ENCODE measurements at regions of chr2 and their contacts with region 1.

Region 1: DNA sequence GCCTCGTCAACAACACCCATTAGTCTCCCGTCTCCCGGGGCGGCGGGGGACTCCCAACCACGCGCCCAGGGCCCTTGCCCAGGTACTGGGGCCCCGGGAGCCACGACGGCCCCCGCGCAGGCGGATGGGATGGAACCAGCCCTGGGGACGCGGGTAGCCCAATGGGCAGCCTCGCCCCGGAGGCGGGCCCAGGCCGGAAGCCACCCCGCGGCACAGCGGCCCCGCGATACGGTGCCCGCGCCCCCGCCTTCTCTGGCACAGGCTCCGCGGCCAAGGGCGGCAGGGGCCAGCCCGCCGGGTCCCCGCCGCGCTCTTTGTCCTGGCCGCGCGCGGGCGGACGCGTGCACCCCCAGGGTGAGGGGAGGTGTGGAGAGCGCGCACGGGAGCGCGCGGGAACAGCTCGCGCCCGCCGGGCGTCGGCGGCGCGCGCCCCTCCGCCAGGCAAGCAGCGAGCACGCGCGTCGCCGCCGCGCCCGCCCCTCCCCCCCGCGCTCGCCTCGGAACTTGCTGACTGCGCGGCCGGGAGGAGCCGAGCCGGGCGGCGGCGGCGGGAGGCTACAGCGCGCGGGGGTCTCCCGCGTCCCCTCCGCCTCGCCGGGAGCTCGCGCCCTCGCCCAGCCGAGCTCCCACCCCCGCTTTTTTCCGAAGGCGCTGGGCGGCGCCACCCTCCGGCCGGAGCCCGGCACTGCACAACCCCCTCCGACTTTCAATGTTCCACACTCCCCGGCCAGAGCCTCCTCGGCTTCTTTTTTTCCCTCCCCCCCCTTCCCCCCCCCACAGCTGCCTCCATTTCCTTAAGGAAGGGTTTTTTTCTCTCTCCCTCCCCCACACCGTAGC is at the start of gene UBE2E3:
- DNase-seq: peak; percentile 74 to 85 (median 79)
- ATAC-seq: peak; percentile 87
- H3K4me3 ChIP-seq: peak within 1 kb of the TSS; percentile 67
- H3K4me3 Mint-ChIP-seq: peak within 1 kb of the TSS; percentile 91 to 99 (median 96)
- H3K27ac ChIP-seq: peak within 1 kb of the TSS; percentile 62
- H3K27ac Mint-ChIP-seq: peak within 1 kb of the TSS; percentile 94 to 98 (median 98)
- H3K4me1 ChIP-seq: peaks cover 20 to 26% of the 10 kb centered on the region in 2 donors
- H3K4me1 Mint-ChIP-seq: peaks cover 25 to 51% (median 44%) of the 10 kb centered on the region in 7 donors
- H3K27me3 ChIP-seq: no peaks in the 10 kb centered on the region
- H3K27me3 Mint-ChIP-seq: peaks cover 0 to 46% (median 0%) of the 10 kb centered on the region in 5 donors
- total RNA-seq, gene UBE2E3: 21.7 to 33.4 (median 24.3) TPM

Region 2: DNA sequence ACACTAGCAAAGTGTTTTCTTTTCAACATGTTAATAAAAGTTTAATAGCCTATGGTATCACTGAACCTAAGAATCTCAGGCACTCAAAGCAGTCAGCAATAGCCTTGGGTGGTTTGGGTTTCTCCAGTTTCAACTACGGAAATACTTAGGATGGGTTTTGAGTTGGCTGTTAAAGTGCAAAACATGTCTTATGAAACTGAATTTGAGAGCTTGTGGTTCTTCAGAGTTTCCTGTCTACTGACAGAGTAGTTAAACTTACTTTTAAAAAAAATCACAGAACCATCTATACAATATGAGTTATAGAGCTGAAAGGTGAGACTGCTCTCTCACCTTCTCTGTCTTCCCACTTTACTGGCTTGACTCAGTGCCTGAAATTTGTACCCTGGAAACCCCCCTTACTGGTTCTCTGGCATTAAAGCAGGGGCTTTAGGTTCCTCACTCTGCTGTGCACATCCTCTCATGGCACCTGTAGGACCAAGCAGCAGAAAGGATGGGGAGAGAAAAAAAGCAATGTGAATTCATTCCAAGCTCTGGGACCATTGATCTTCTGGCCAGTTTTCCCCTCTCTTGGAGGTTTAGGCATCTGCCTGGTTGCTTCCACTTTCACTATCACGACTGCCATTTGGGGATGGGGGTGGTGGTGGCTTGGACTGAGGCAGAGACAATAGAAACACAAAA is 1948.5 kb before region 1 on chr2:
- CTCF ChIA-PET with region 1: no interaction called
- POLR2A ChIA-PET with region 1: no interaction called
- intact Hi-C with region 1: loop called in 1 of 2 experiments (anchors 10 kb)
- DNase-seq: peak in 8 of 9 donors; percentile 29 to 77 (median 67)
- ATAC-seq: peak; percentile 92
- H3K4me3 ChIP-seq: peak overlapping the region; percentile 40
- H3K4me3 Mint-ChIP-seq: peak overlapping the region; percentile 71 to 87 (median 84)
- H3K27ac ChIP-seq: peak overlapping the region; percentile 80
- H3K27ac Mint-ChIP-seq: peak overlapping the region; percentile 93 to 99 (median 98)
- H3K4me1 ChIP-seq: peaks cover 0 to 15% of the 10 kb centered on the region in 2 donors
- H3K4me1 Mint-ChIP-seq: peaks cover 13 to 76% (median 46%) of the 10 kb centered on the region in 7 donors
- H3K27me3 ChIP-seq: no peaks in the 10 kb centered on the region
- H3K27me3 Mint-ChIP-seq: no peaks in the 10 kb centered on the region

Region 3: GRCh38 chr2:180970016-180970415 is 10.3 kb before region 1 on chr2:
- CTCF ChIA-PET with region 1: interaction called, 4 read pairs
- POLR2A ChIA-PET with region 1: interaction called, 14 read pairs
- intact Hi-C with region 1: loop called in 1 of 2 experiments (anchors 1 kb)
- DNase-seq: no peak
- ATAC-seq: no peak
- H3K4me3 ChIP-seq: no peak overlapping the region
- H3K4me3 Mint-ChIP-seq: no peak overlapping the region
- H3K27ac ChIP-seq: no peak overlapping the region
- H3K27ac Mint-ChIP-seq: no peak overlapping the region
- H3K4me1 ChIP-seq: no peaks in the 10 kb centered on the region
- H3K4me1 Mint-ChIP-seq: no peaks in the 10 kb centered on the region
- H3K27me3 ChIP-seq: no peaks in the 10 kb centered on the region
- H3K27me3 Mint-ChIP-seq: peaks cover 0 to 55% (median 10%) of the 10 kb centered on the region in 5 donors

Region 4: GRCh38 chr2:181058378-181059269 is 78.3 kb after region 1 on chr2:
- CTCF ChIA-PET with region 1: interaction called, 6 read pairs
- POLR2A ChIA-PET with region 1: no interaction called
- intact Hi-C with region 1: loop called (anchors 1 kb)
- DNase-seq: peak in 6 of 9 donors; percentile 18 to 54 (median 47)
- ATAC-seq: peak; percentile 66
- H3K4me3 ChIP-seq: no peak overlapping the region
- H3K4me3 Mint-ChIP-seq: no peak overlapping the region
- H3K27ac ChIP-seq: no peak overlapping the region
- H3K27ac Mint-ChIP-seq: no peak overlapping the region
- H3K4me1 ChIP-seq: no peaks in the 10 kb centered on the region
- H3K4me1 Mint-ChIP-seq: peaks cover 2 to 16% (median 13%) of the 10 kb centered on the region in 7 donors
- H3K27me3 ChIP-seq: no peaks in the 10 kb centered on the region
- H3K27me3 Mint-ChIP-seq: no peaks in the 10 kb centered on the region

Region 5: GRCh38 chr2:181305301-181306123 is 325.2 kb after region 1 on chr2:
- CTCF ChIA-PET with region 1: no interaction called
- POLR2A ChIA-PET with region 1: interaction called, 3 read pairs
- intact Hi-C with region 1: loop called (anchors 5 to 10 kb)
- DNase-seq: peak in 5 of 9 donors; percentile 47 to 61 (median 54)
- ATAC-seq: peak; percentile 77
- H3K4me3 ChIP-seq: peak overlapping the region; percentile 14
- H3K4me3 Mint-ChIP-seq: peak overlapping the region; percentile 71 to 94 (median 82)
- H3K27ac ChIP-seq: peak overlapping the region; percentile 84
- H3K27ac Mint-ChIP-seq: peak overlapping the region; percentile 90 to 100 (median 95)
- H3K4me1 ChIP-seq: peaks cover 66 to 73% of the 10 kb centered on the region in 2 donors
- H3K4me1 Mint-ChIP-seq: peaks cover 49 to 90% (median 84%) of the 10 kb centered on the region in 7 donors
- H3K27me3 ChIP-seq: no peaks in the 10 kb centered on the region
- H3K27me3 Mint-ChIP-seq: no peaks in the 10 kb centered on the region

Region 6: DNA sequence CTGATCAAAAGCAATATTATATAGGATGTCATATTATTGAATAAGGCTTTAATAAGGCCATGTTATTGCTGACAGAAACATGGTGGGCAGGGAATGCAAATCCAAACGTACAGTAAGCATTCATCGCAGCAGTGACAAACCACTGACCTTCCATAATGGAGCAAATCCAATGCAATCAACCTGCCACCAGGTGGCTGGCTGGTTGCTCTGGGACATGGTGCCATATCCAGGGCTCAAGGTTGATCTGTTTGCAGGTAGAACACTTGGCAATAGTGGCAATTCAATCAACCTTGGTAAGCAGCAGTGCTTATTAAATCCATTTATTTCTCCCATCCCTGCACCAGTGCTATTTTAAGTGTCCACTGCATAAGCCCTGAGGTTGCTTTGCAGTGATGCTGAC is 601.2 kb after region 1 on chr2:
- CTCF ChIA-PET with region 1: no interaction called
- POLR2A ChIA-PET with region 1: no interaction called
- intact Hi-C with region 1: no loop called
- DNase-seq: no peak
- ATAC-seq: no peak
- H3K4me3 ChIP-seq: no peak overlapping the region
- H3K4me3 Mint-ChIP-seq: no peak overlapping the region
- H3K27ac ChIP-seq: no peak overlapping the region
- H3K27ac Mint-ChIP-seq: no peak overlapping the region
- H3K4me1 ChIP-seq: peaks cover 0 to 3% of the 10 kb centered on the region in 2 donors
- H3K4me1 Mint-ChIP-seq: peaks cover 4 to 12% (median 9%) of the 10 kb centered on the region in 7 donors
- H3K27me3 ChIP-seq: no peaks in the 10 kb centered on the region
- H3K27me3 Mint-ChIP-seq: peaks cover 4 to 21% (median 13%) of the 10 kb centered on the region in 5 donors

Region 7: DNA sequence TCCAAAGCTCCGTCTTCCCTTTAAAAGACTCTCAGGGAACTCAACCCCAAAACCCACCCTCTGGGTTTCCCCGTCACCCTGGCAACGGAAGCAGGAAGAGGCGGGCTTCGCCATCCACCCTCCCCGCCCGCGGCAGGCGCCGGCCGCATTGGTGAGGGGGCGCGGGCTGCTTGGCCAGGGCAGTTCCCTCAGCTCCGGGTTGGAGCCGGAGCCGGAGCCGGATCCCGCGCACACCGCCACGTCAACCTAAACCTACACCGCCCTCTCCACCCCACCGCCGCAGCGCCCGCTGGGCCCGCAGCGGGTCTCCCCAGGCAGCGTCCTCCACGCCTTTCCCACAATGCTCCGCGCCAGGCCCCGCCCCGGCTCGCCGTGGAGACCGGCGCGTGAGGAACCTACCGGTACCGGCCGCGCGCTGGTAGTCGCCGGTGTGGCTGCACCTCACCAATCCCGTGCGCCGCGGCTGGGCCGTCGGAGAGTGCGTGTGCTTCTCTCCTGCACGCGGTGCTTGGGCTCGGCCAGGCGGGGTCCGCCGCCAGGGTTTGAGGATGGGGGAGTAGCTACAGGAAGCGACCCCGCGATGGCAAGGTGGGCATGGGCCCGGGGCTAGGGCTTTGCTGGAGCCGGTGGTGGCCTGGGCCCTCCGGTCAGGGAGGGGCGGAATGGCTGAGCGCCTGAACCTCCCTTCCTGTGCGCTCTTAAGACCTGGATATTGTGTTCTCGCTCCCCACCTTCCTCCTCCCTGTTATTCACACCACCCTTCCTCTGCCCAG is 1735.8 kb after region 1 on chr2 and contains the start of gene DNAJC10:
- CTCF ChIA-PET with region 1: no interaction called
- POLR2A ChIA-PET with region 1: no interaction called
- intact Hi-C with region 1: loop called (anchors 2 to 5 kb)
- DNase-seq: peak; percentile 79 to 91 (median 86)
- ATAC-seq: peak; percentile 91
- H3K4me3 ChIP-seq: peak within 1 kb of the TSS; percentile 86
- H3K4me3 Mint-ChIP-seq: no peak within 1 kb of the TSS
- H3K27ac ChIP-seq: peak within 1 kb of the TSS; percentile 73
- H3K27ac Mint-ChIP-seq: no peak within 1 kb of the TSS
- H3K4me1 ChIP-seq: peaks cover 9 to 16% of the 10 kb centered on the region in 2 donors
- H3K4me1 Mint-ChIP-seq: peaks cover 0 to 13% (median 9%) of the 10 kb centered on the region in 7 donors
- H3K27me3 ChIP-seq: no peaks in the 10 kb centered on the region
- H3K27me3 Mint-ChIP-seq: peaks cover 0 to 11% (median under 1%) of the 10 kb centered on the region in 5 donors
- total RNA-seq, gene DNAJC10: 35.9 to 70.4 (median 55.6) TPM

Measured in naive thymus-derived CD4-positive, alpha-beta T cell (primary cell).